Posterior vena cava (tissue), 2 donors: ENCODE measurements at regions of chr2 and their contacts with region 1.

Region 1: DNA sequence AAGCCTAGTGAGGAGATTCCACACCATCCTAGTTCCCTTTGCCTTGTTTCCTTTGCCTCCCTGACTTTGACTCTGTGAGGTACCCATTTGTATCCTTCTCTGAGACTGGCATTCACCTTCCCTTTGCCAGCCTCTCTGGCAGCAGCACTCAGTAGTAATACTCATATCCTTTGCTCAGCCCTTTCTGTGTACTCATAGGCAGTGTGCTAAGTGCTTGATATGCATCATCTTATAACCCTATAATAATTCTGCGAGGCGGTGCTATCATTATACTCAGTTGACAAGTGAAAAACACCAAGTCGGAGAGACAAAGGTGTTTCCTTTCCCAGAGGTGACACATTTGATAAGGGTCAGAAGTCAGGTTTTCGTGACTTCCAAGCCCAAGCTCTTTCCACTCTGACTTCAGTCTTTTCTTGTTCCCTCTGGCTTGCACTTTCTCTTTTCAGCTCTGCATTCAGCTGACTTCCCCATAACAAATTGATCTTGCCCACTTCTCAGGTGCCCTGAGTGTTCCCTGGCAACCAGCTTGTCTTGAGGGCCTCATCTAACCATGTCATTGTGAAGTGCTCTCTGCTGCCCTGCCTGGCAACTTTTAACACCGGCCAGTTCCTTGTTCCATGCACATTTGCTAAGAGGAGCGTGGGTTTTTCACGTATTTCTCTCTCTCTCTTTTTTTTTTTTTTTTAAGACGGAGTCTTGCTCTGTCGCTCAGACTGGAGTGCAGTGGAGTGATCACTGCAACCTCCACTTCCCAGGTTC is 94.5 kb upstream of the UPP2 start:
- DNase-seq: no peak

Region 2: DNA sequence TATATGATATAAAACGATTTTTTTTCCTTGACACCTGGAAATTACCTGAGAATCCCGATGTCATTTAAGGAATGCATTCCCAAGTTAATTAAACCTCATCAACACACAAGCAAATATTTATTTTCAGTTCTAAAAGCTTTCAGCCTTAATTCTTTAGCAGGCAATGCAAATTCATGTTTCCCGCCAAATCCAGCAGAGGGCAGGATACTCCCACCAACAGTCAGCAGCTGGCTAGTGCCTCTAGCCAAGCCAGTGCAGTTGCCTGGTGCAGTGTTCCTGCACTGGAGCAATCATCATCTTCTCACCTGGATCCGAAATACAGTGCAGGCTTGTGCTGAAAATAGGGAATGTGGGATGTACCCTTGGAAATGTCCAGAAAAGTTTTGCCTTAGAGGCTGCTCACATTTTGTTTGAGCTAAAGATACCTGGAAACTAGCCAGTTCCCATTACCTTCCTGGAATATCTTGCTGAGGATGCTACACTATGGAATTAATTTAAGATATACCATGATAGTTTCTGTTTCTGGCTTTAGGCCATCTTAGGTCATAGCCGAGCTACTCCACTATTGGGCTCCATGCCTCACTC is 514.9 kb before region 1 on chr2:
- intact Hi-C with region 1: loop called in 1 of 2 experiments (anchors 10 kb)
- DNase-seq: no peak

Region 3: DNA sequence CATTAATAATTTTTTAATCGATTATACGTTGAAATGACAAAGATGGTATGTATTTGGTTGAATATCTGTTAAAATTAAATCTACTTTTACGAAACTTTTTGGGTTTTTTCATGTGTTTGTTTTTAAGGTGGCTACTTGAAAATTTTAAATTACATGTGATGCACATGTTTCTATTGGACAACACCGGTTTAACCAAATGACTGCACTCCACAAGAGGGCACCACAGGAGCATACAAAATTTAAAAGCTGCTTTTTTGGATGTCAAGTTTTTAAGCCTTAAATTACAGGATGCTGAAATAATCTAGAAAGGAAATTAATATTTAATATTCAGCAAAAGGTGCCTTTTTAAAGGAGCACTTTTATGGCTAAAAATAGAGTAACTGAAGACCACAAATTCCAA is 229.7 kb before region 1 on chr2:
- intact Hi-C with region 1: loop called (anchors 5 to 10 kb)
- DNase-seq: no peak

Region 4: DNA sequence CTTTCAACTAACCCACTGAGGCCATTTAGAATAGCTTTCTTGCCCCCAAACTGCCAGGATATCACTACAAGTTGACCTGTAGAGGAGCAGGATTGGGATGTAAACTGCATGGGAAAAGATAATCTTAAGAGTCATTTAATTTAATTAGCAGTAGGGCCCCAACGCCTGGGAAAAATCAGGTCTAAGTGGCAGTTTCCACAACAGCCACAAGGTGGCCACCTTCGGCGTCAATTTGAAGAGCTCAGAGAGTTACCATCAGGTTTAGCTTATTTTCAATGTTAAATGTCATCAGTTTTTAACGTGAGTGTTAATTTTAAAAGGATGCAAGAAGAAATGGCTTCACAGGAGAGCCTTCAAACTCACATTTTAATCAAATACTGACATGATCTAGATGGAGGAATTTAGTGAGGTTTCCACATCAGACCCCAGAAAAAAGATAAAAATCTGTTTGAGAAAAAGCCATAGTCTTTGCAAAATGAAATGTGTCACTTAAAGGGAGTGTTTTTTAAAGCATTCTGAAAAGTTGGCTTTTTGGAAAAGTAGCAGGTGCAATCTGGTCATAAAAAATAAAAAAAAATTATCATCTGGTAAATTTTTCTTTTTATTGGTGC is 17.3 kb after region 1 on chr2:
- intact Hi-C with region 1: no loop called
- DNase-seq: no peak